GM12878 (cell line): ENCODE measurements at regions of chr11 and their contacts with region 1.

Region 1: GRCh38 chr11:132972565-132972964 is 559.7 kb downstream of the OPCML start:
- DNase-seq: no peak
- ATAC-seq: peak; percentile 58
- H3K4me3 ChIP-seq: no peak overlapping the region
- H3K27ac ChIP-seq: no peak overlapping the region
- H3K4me1 ChIP-seq: no peaks in the 10 kb centered on the region
- H3K27me3 ChIP-seq: no peaks in the 10 kb centered on the region
- CTCF ChIP-seq: no peak
- EP300 ChIP-seq: no peak
- POLR2A ChIP-seq: no peak
- RAD21 ChIP-seq: no peak

Region 2: DNA sequence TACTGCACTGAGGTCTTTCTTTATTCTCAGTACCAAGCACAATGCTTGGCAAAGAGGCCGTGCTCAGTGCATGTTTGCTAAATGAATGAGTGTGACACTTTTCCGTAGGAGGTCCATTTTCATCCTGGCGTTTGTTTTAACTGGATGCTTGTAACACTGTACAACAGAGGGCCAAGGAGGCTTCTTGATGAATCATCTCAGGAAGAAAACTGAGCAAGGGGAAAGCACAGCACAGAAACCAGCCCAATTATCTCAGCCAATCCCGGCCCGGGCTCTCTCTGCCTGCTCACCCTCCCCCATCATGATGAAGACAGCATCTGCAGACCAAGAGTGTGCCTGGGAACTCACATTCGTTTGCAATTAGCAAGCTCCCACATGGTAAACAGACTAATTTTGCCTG is 10.5 kb before region 1 on chr11:
- CTCF ChIA-PET with region 1: interaction called, 16 read pairs
- POLR2A ChIA-PET with region 1: interaction called, 5 read pairs
- RAD21 ChIA-PET with region 1: interaction called, 6 read pairs
- SMC1A ChIA-PET with region 1: interaction called, 17 read pairs
- in situ Hi-C with region 1: no loop called
- intact Hi-C with region 1: loop called (anchors 2 kb)
- DNase-seq: no peak
- ATAC-seq: peak; percentile 76
- H3K4me3 ChIP-seq: no peak overlapping the region
- H3K27ac ChIP-seq: no peak overlapping the region
- H3K4me1 ChIP-seq: no peaks in the 10 kb centered on the region
- H3K27me3 ChIP-seq: no peaks in the 10 kb centered on the region
- CTCF ChIP-seq: no peak
- EP300 ChIP-seq: no peak
- POLR2A ChIP-seq: no peak
- RAD21 ChIP-seq: no peak

Region 3: DNA sequence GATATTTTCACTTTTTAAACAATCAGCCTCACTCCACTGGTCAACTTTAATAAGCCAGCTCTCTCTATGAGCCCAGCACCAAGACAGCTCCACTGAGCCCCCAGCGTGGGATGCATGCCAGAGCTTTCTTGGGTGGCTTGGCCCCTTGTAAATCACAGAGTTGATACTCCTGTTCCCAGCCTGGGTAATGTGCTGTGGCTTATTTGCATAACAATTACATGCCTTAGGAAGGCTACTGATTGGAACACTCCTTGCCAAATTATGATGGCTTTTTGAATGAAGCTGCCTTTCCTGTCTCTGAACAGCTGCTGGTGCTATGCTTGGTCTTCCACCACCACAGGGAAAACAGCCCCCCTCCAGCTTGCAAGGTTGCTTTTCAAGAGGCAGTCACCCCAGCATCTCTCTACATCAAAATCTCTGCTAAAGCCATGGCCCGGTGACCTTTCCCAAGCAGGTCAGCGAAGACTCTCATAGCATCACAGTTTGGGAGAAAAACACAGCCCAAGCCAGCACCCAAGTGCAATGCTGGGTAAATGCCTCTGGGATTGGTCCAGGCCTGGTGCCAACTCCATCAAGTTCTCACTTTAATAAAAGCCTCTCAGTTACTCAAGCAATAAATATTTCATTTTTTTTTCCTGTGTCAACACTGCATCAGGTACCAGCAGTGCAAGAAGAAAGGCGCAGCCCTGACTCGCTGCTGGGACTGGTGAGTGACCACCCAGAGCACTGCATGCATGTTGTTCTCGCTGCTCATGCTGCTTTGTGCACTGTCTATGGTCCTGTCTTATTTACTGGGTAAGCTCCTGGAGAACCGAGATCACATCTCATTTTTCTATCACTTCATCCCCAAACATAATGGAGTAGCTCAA is 10.4 kb after region 1 on chr11:
- CTCF ChIA-PET with region 1: interaction called, 10 read pairs
- POLR2A ChIA-PET with region 1: no interaction called
- RAD21 ChIA-PET with region 1: interaction called, 3 read pairs
- SMC1A ChIA-PET with region 1: interaction called, 9 read pairs
- in situ Hi-C with region 1: no loop called
- intact Hi-C with region 1: no loop called
- DNase-seq: no peak
- ATAC-seq: no peak
- H3K4me3 ChIP-seq: no peak overlapping the region
- H3K27ac ChIP-seq: no peak overlapping the region
- H3K4me1 ChIP-seq: no peaks in the 10 kb centered on the region
- H3K27me3 ChIP-seq: no peaks in the 10 kb centered on the region; a peak in 1 of 4 replicates
- CTCF ChIP-seq: no peak
- EP300 ChIP-seq: no peak
- POLR2A ChIP-seq: no peak
- RAD21 ChIP-seq: no peak